Caco-2 (cell line): ENCODE measurements at regions of chr12 and their contacts with region 1.

Region 1: DNA sequence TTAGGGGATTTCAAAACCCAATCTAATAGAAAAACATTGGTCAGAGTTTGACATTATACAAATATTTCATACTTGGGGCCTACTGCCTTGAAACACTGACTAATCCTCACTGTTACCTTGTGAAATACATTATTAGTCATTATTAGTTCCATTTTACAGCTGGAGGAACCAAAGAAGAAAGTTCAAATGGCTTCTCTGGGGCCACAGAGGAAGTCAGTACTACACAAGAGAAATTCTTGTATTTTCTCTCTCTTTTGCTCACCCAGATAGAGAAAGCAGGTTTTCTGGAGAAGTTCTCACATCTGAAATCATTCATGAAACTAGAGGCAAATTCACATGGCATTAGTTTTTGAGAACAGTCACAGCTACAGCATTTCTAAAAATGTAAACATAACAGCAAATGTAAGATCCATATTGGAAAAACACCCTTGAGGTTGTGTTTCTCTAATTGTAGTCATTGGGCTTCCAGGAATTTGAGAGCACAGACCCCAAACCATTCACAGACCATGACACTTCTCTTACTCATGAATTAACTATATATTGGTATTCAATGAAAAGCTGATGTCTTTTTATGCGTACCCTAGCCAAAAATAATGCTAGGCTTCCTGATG is 83.0 kb downstream of the LLPH start:
- DNase-seq: no peak
- H3K4me3 ChIP-seq: no peak overlapping the region
- H3K4me3 Mint-ChIP-seq: no peak overlapping the region
- H3K27ac Mint-ChIP-seq: no peak overlapping the region
- H3K4me1 ChIP-seq: peaks cover 41% of the 10 kb centered on the region
- H3K4me1 Mint-ChIP-seq: peaks cover 10% of the 10 kb centered on the region
- H3K27me3 ChIP-seq: no peaks in the 10 kb centered on the region
- H3K27me3 Mint-ChIP-seq: no peaks in the 10 kb centered on the region
- CTCF ChIP-seq: no peak

Region 2: DNA sequence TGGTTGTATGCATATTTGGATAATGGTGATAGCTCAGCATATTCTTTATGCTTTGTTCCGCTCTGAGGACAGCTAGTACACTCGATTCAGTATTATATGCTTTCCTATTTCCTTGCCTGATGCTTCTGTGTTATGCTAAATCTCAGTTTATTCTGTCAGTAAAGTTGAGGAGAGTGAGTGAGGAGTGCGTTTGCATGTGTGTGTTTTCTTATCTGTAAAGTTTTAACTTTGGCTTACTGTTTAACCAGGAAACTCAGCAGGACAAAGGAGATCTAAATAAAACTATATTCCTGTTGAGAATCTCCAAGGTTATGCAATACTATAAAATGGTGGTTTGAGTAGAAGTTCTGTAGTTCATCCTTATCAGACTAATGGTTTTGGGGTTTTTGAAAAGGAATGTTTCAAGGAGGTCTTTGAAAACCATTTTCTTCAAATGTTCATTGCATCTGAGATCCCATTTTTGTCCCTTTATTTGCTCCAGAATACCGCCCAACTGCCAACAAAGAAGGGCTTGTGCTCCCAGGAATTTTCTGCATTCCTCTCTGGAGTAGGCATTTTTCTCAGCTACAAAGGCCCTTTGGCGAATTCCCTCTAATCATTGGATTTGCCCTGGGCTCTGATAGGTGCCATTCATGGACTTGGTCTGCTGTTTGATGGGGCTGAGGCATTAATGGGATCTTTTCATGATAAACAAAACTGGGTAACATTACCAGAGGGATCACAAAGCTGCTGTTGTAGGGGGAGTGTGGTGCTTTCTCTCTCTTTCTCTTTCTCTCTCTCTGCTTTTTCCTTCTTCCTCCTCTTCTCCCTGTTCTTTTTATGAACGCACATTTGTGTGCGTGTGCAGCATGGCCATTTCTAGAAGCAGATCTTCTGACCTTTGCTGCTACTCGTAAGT is 151.5 kb before region 1 on chr12:
- CTCF ChIA-PET with region 1: no interaction called
- POLR2A ChIA-PET with region 1: interaction called, 10 read pairs
- intact Hi-C with region 1: loop called (anchors 1 kb)
- DNase-seq: peak; percentile 64 to 80
- H3K4me3 ChIP-seq: peak overlapping the region; percentile 16; the same call in 1 of the 2 replicates
- H3K4me3 Mint-ChIP-seq: peak overlapping the region; percentile 69
- H3K27ac Mint-ChIP-seq: peak overlapping the region; percentile 85
- H3K4me1 ChIP-seq: peaks cover 64% of the 10 kb centered on the region
- H3K4me1 Mint-ChIP-seq: peaks cover 68% of the 10 kb centered on the region
- H3K27me3 ChIP-seq: no peaks in the 10 kb centered on the region
- H3K27me3 Mint-ChIP-seq: no peaks in the 10 kb centered on the region
- CTCF ChIP-seq: no peak

Region 3: DNA sequence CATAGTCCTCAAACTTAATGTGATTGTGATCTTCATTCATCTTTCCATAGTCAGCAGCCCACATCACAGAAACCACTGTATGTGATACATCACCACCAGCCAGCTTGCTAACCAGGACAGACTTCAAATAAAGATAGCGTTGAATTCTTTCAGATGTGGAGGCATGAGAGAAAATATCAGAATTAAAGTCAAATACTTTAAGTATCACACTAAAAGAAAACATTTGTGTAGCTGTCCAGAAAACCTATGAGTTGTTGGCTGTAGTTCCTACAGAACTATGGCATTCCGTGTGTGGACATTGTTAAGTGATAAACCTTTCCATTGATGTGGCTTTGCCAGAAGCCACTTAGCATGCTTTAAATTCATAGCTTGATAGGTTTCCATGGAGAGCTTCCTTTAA is 22.0 kb before region 1 on chr12:
- CTCF ChIA-PET with region 1: no interaction called
- POLR2A ChIA-PET with region 1: no interaction called
- intact Hi-C with region 1: loop called (anchors 2 kb)
- DNase-seq: no peak
- H3K4me3 ChIP-seq: no peak overlapping the region
- H3K4me3 Mint-ChIP-seq: no peak overlapping the region
- H3K27ac Mint-ChIP-seq: no peak overlapping the region
- H3K4me1 ChIP-seq: peaks cover 9% of the 10 kb centered on the region
- H3K4me1 Mint-ChIP-seq: peaks cover 11% of the 10 kb centered on the region
- H3K27me3 ChIP-seq: no peaks in the 10 kb centered on the region
- H3K27me3 Mint-ChIP-seq: no peaks in the 10 kb centered on the region
- CTCF ChIP-seq: no peak

Region 4: DNA sequence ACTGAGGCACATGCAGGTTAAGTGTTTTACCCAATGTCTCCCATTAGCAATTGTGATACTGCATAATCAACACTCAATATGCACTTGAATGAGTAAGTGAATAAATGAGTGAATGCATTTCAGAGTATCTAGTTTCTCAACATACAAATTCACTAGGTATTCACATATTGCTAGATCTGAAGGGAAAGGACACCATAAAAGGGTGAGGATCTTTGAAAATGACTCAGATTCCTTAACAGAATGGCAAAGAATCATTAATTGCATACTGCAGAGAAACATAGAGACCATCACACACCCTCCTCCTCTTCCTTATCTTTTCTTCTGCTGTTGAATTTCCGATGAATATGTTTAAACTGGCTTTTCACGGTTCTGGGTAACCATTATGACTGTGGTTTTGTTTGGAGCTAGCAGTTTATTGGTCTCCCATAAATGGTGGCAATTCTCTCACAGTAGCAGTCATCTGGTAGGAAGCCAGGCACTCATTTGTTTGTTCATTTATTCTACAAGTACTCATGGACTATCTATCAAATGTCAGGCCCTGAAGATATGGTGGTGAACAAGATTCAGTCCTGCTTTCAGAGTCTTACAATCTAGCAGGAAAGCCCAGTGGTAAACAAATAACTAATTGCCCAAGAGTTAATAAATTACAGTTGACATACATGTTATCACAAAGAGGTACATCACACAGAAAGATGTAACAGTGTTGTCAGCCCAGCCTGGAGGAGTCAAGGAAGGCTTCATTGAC is 12.8 kb after region 1 on chr12:
- CTCF ChIA-PET with region 1: no interaction called
- POLR2A ChIA-PET with region 1: no interaction called
- intact Hi-C with region 1: loop called (anchors 1 kb)
- DNase-seq: peak; percentile 31 to 35
- H3K4me3 ChIP-seq: no peak overlapping the region
- H3K4me3 Mint-ChIP-seq: peak overlapping the region; percentile 40
- H3K27ac Mint-ChIP-seq: no peak overlapping the region
- H3K4me1 ChIP-seq: peaks cover 23% of the 10 kb centered on the region
- H3K4me1 Mint-ChIP-seq: peaks cover 21% of the 10 kb centered on the region
- H3K27me3 ChIP-seq: no peaks in the 10 kb centered on the region
- H3K27me3 Mint-ChIP-seq: no peaks in the 10 kb centered on the region
- CTCF ChIP-seq: no peak